ENCODE measurements at regions of chr4 and their contacts with region 1.

Region 1: DNA sequence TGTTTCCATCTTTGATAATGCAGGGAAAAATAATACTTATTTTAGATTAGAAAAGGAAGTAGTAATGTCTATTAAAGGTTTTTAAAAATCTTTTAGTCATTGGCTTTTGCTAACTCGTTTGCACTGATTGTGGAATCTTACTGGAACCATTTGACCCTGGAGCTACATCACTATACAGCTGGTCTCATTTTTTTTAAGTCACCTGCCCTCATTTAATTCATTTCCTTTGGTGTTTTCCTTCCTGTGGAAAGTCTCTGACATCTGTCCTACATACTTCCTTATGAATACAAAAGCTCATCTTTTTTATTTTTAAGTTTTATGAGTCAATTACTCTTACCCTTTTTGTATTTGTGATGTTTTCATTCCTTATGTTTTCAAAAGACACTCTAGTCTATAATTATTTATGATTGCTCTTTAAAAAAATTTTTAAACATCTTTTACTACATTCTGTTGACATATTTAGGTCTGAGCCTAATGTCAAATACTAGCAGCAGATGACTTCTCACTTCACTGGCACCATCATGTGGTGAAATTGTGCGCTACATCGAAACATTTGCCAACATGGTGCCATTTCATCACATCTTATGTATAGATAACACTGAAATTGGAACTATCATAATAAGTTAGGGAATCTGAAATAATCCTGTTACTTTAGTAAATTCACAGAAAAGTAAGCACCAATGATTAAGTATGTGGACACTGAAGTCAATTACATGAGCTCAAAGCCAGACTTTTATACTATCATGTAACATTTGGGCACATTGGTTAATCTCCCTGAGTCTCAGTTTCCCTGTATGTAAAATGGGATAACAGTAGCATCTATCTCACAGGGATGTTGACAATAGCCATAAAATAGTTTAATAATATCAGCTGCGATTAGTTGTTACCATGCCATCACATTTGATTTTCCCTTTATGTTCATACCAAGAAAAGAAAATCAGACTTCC is 9.4 kb upstream of the MMAA start:
- DNase-seq: peak; percentile 31
- H3K4me3 ChIP-seq: no peak overlapping the region
- H3K27ac ChIP-seq: no peak overlapping the region
- H3K4me1 ChIP-seq: no peaks in the 10 kb centered on the region
- H3K27me3 ChIP-seq: no peaks in the 10 kb centered on the region
- CTCF ChIP-seq: peak; percentile 82

Region 2: GRCh38 chr4:145216535-145216934 is 393.2 kb before region 1 on chr4:
- intact Hi-C with region 1: loop called (anchors 5 kb)
- DNase-seq: no peak
- H3K4me3 ChIP-seq: no peak overlapping the region
- H3K27ac ChIP-seq: no peak overlapping the region
- H3K4me1 ChIP-seq: no peaks in the 10 kb centered on the region
- H3K27me3 ChIP-seq: no peaks in the 10 kb centered on the region
- CTCF ChIP-seq: peak; percentile 61

Region 3: DNA sequence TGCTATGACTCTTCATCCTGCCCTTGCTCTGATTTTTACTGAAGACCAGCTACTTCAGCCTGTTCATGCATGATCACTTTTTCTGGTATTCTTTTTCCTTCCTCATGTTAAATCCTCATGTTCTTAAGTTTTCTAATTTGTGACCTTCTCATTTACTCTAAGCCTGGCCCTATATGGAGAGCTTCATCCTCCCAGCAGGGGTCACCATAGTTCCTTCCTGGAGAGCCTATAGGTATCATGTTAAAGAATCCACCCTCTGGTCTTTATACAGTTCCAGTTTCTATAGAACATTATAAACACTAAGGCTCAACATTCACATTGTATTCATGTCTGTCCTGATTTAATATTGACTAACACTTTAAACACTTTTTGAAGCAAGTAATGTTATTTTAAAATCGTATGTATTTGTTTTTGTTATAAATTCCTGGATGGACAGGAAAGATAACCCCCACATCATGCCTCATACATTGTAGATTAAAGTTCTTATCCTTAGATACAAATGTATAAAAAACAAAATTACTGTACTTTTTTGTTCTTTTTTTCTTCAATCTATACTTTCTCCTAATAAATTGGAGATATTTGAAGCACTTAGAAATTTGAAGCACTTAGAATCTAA is 375.6 kb before region 1 on chr4:
- intact Hi-C with region 1: loop called (anchors 5 kb)
- DNase-seq: no peak
- H3K4me3 ChIP-seq: no peak overlapping the region
- H3K27ac ChIP-seq: no peak overlapping the region
- H3K4me1 ChIP-seq: no peaks in the 10 kb centered on the region
- H3K27me3 ChIP-seq: no peaks in the 10 kb centered on the region
- CTCF ChIP-seq: peak; percentile 84